T-cell (primary cell): ENCODE measurements at regions of chr17 and their contacts with region 1.

Region 1: DNA sequence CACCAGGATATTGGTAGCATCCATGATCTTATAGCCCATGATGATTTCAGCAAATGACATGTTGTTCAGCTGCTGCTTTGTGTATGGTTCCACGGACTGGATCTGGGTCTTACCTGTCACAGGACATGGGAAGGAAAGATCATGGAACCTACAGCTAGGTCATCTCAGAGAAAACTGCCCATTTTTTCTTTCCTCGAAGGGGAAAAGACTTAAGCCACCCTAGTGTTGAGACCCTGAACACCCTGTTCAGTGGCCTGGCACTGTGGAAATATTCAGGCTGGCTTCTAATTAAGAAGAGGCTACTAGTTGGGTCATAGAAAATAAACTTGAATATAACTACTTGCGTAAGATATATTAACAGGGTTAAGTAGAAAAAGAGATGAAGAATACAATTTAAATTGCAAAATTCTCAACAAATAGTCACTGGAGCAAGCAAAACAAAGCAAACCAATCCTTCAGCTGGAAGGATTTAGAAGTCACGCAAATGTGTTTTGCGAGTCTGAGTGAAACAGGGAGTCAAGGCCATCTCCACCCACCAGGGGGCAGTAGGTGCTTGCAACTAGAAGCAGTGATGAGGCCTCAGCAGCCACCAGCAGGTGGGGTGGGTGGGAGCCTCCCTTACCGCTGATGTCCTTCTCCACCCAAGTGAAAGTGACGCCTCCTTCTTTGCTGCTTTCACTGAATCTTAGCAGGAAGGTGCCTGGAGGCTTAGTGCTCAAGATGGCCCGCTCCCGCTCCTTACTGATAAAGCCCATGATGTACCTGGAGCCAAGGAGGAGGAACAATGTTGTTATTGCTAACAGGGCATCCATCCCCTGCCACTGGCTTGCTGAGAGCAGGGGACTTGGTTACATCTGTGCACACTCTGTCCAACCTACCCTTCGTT is 34.3 kb downstream of the STAT5A start:
- DNase-seq: peak; percentile 87 to 98 (median 94)
- ATAC-seq: peak; percentile 91 to 97 (median 94)
- H3K4me3 ChIP-seq: no peak overlapping the region
- H3K4me3 Mint-ChIP-seq: no peak overlapping the region
- H3K27ac ChIP-seq: peak overlapping the region; percentile 13
- H3K27ac Mint-ChIP-seq: peak overlapping the region; percentile 82 to 83
- H3K4me1 ChIP-seq: peaks cover 15 to 28% of the 10 kb centered on the region in 2 experiments
- H3K4me1 Mint-ChIP-seq: peaks cover 41 to 44% (median 43%) of the 10 kb centered on the region in 3 donors
- H3K27me3 ChIP-seq: no peaks in the 10 kb centered on the region
- H3K27me3 Mint-ChIP-seq: no peaks in the 10 kb centered on the region

Region 2: DNA sequence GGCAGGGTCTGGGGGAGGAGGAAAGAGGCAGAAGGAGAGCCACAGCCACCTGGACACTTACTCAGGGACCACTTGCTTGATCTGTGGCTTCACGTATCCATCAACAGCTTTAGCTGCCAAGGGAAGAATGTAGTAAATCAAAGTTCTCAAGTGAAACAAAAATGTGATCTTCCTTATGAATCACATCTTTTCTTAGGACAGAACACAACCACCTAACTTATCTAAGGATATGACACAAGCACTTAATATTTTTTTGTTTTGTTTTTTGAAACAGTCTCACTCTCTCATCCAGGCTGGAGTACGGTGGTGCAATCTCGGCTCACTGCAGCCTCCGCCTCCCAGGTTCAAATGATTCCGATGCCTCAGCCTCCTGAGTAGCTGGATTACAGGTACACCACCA is 119.9 kb before region 1 on chr17:
- CTCF ChIA-PET with region 1: no interaction called
- POLR2A ChIA-PET with region 1: interaction called in 1 of 2 experiments, 16 read pairs
- DNase-seq: no peak
- ATAC-seq: no peak
- H3K4me3 ChIP-seq: no peak overlapping the region
- H3K4me3 Mint-ChIP-seq: no peak overlapping the region
- H3K27ac ChIP-seq: no peak overlapping the region
- H3K27ac Mint-ChIP-seq: no peak overlapping the region
- H3K4me1 ChIP-seq: no peaks in the 10 kb centered on the region
- H3K4me1 Mint-ChIP-seq: peaks cover 0 to 6% (median 3%) of the 10 kb centered on the region in 3 donors
- H3K27me3 ChIP-seq: no peaks in the 10 kb centered on the region
- H3K27me3 Mint-ChIP-seq: no peaks in the 10 kb centered on the region

Region 3: DNA sequence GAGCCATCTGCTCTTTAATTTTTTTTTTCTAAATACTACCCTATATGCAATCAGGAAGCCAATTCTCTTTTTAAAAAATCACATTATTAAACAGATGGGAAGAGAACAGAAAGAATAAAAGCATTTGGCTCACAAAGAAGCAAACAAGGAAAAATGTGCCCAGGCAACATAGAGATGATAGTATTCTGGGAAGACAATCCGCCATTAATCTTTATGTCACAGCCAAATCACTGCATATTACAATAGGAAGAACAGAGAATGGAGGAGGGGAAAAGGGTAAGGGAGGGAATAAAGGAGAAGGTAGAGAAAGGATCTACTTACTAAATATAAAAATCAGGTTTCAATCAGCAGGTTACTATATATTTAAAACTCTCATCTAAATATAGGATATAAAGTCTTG is 80.8 kb before region 1 on chr17:
- CTCF ChIA-PET with region 1: no interaction called
- POLR2A ChIA-PET with region 1: no interaction called
- DNase-seq: no peak
- ATAC-seq: no peak
- H3K4me3 ChIP-seq: no peak overlapping the region
- H3K4me3 Mint-ChIP-seq: no peak overlapping the region
- H3K27ac ChIP-seq: no peak overlapping the region
- H3K27ac Mint-ChIP-seq: no peak overlapping the region
- H3K4me1 ChIP-seq: peaks cover 11 to 22% of the 10 kb centered on the region in 2 experiments
- H3K4me1 Mint-ChIP-seq: peaks cover 55 to 65% (median 60%) of the 10 kb centered on the region in 3 donors
- H3K27me3 ChIP-seq: no peaks in the 10 kb centered on the region
- H3K27me3 Mint-ChIP-seq: no peaks in the 10 kb centered on the region

Region 4: GRCh38 chr17:42266918-42267778 is 55.5 kb before region 1 on chr17:
- CTCF ChIA-PET with region 1: no interaction called
- POLR2A ChIA-PET with region 1: no interaction called
- DNase-seq: peak in 27 of 35 experiments; percentile 19 to 87 (median 53)
- ATAC-seq: peak; percentile 67 to 90 (median 78)
- H3K4me3 ChIP-seq: no peak overlapping the region
- H3K4me3 Mint-ChIP-seq: peak overlapping the region; percentile 24 to 29 (median 28)
- H3K27ac ChIP-seq: peak overlapping the region; percentile 83
- H3K27ac Mint-ChIP-seq: peak overlapping the region; percentile 84 to 91
- H3K4me1 ChIP-seq: peaks cover 34 to 41% of the 10 kb centered on the region in 2 experiments
- H3K4me1 Mint-ChIP-seq: peaks cover 58 to 68% (median 67%) of the 10 kb centered on the region in 3 donors
- H3K27me3 ChIP-seq: no peaks in the 10 kb centered on the region
- H3K27me3 Mint-ChIP-seq: no peaks in the 10 kb centered on the region

Region 5: GRCh38 chr17:42312285-42313130 is 10.1 kb before region 1 on chr17:
- CTCF ChIA-PET with region 1: interaction called in 1 of 2 experiments, 13 read pairs
- POLR2A ChIA-PET with region 1: interaction called in 1 of 2 experiments, 6 read pairs
- DNase-seq: peak; percentile 47 to 88 (median 70)
- ATAC-seq: peak; percentile 67 to 75 (median 74)
- H3K4me3 ChIP-seq: peak overlapping the region; percentile 23 to 42
- H3K4me3 Mint-ChIP-seq: peak overlapping the region; percentile 53 to 77 (median 56)
- H3K27ac ChIP-seq: peak overlapping the region; percentile 45
- H3K27ac Mint-ChIP-seq: peak overlapping the region; percentile 92 to 95
- H3K4me1 ChIP-seq: peaks cover 69 to 89% of the 10 kb centered on the region in 2 experiments
- H3K4me1 Mint-ChIP-seq: peaks cover 73 to 78% (median 77%) of the 10 kb centered on the region in 3 donors
- H3K27me3 ChIP-seq: no peaks in the 10 kb centered on the region
- H3K27me3 Mint-ChIP-seq: no peaks in the 10 kb centered on the region

Region 6: DNA sequence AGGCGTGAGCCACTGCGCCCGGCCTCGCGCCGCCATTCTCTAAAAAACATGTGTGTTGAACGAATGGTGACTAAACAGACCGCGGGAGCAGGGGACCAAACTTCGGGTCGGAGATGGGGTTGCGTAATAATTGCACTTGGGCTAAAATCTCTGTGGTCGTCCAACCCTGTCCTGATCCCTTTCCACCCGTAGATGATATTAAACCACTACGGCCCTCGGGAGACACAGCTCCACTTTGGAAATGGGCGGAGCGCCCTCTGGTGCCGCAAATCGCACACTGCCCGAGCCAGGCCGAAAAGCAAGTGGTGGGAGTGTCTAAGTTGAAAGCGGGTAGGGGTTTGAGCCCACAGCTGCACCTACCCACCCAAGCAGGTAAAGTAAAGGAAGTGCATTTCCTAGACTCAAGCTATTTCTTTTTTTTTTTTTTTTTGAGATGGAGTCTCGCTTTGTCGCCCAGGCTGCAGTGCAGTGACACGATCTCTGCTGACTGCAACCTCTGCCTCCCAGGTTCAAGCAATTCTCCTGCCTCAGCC is 83.4 kb after region 1 on chr17:
- CTCF ChIA-PET with region 1: interaction called, 16 to 27 read pairs
- POLR2A ChIA-PET with region 1: interaction called, 4 to 9 read pairs
- DNase-seq: peak; percentile 61 to 88 (median 80)
- ATAC-seq: peak; percentile 75 to 84 (median 80)
- H3K4me3 ChIP-seq: no peak overlapping the region
- H3K4me3 Mint-ChIP-seq: no peak overlapping the region
- H3K27ac ChIP-seq: no peak overlapping the region
- H3K27ac Mint-ChIP-seq: no peak overlapping the region
- H3K4me1 ChIP-seq: peaks cover 9 to 14% of the 10 kb centered on the region in 2 experiments
- H3K4me1 Mint-ChIP-seq: peaks cover 7 to 15% (median 12%) of the 10 kb centered on the region in 3 donors
- H3K27me3 ChIP-seq: peaks cover 0 to 19% of the 10 kb centered on the region in 2 experiments
- H3K27me3 Mint-ChIP-seq: peaks cover 0 to 4% of the 10 kb centered on the region in 2 donors